H1 (cell line): ENCODE measurements at regions of chr12 and their contacts with region 1.

Region 1: DNA sequence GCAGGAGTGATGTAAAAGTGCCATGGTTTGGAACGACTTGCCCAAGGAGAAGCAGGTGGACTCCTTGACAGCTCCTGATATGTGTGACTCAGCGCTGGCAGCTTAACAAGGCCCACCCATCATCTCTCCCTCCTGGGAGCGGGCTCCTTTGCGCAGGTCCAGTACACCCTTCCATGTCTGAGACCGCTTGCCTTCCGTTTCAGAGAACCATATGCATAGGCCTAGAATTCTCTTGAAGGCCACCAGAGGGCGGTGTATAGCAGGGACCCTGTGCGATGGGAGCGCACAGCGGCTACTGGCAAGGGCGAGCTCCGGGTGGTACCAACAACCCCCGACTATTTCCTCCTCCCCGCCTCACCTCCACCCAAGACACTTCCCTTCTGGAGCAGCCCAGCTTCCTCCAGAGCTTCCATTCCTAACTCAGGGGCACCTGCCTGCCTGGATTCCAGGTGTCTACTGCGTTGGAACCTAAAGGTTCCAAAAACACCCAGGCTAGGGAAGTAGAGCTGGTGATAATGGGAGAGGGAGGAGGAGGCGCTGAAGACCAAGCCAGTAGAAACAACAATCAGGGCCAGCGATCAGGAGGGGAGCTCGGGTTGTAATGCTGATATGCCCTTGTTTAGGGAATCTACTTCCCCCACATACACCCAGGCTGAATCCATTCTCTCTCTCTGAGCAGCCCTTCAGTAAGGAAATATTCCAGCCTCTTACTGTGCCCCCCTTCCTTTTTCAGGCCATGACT is 6.2 kb downstream of the DHH start:
- DNase-seq: peak in 1 of 2 experiments; percentile 81
- H3K4me3 ChIP-seq: peak overlapping the region in 1 of 4 experiments; percentile 45; a peak in 3 of 8 replicates
- H3K27ac ChIP-seq: no peak overlapping the region
- H3K4me1 ChIP-seq: peaks cover 0 to 36% (median 12%) of the 10 kb centered on the region in 4 experiments; a peak in 6 of 7 replicates
- H3K27me3 ChIP-seq: peaks cover 46 to 69% (median 61%) of the 10 kb centered on the region in 4 experiments
- CTCF ChIP-seq: peak; percentile 84 to 93 (median 89)
- EP300 ChIP-seq: no peak
- POLR2A ChIP-seq: no peak
- RAD21 ChIP-seq: peak; percentile 67 to 74

Region 2: GRCh38 chr12:49049566-49050413 is 38.6 kb before region 1 on chr12:
- CTCF ChIA-PET with region 1: interaction called, 13 read pairs
- POLR2A ChIA-PET with region 1: no interaction called
- DNase-seq: no peak
- H3K4me3 ChIP-seq: no peak overlapping the region
- H3K27ac ChIP-seq: no peak overlapping the region
- H3K4me1 ChIP-seq: no peaks in the 10 kb centered on the region
- H3K27me3 ChIP-seq: no peaks in the 10 kb centered on the region
- CTCF ChIP-seq: no peak
- EP300 ChIP-seq: no peak
- POLR2A ChIP-seq: no peak
- RAD21 ChIP-seq: no peak

Region 3: DNA sequence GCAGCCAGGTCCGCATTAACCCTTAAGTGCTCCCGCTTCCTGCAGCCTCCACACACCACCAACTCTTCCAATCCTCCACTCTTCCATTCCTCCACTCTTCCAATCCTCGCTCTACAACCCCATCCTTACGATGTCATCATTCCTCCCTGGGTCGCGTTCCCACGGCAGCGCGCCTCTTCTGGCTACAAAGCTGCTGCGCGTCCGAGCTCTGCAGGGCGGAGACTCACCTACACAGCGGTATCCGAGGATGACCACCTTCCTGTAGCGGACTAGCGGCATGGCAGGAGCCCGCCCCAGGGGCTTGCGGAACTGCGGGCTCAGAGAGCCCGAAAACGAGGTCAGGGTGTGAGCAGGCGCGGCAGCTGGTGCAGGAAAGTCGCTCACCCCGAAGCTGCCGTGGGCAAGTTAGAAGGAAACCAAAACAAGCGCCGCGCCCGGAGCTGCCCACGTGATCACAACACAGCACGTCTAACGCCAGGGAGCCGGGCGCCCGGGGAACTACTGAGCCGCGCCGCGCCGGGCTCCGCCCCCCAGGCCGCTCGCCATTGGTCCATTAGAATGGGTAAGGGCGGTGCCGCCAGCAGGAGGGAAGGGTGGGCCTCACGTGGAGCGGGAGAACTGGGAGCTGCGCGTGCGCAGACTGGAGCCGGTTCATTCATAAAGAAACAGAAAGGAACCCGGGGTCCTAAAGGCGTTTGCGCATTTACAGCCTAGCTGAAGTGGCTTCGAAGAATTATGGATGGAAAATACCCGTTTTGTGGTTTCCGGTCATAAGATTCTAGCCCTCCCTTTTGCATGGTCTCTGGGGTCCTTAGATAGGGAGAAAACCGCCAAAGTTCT is 18.6 kb before region 1 on chr12 and contains the start of gene RHEBL1:
- CTCF ChIA-PET with region 1: interaction called, 129 read pairs
- POLR2A ChIA-PET with region 1: interaction called, 6 read pairs
- DNase-seq: peak; percentile 86 to 98
- H3K4me3 ChIP-seq: peak within 1 kb of the TSS; percentile 70 to 93 (median 80)
- H3K27ac ChIP-seq: no peak within 1 kb of the TSS
- H3K4me1 ChIP-seq: peaks cover 2 to 6% (median 4%) of the 10 kb centered on the region in 4 experiments; a peak in 5 of 7 replicates
- H3K27me3 ChIP-seq: peaks cover 0 to 8% (median 3%) of the 10 kb centered on the region in 4 experiments; a peak in 5 of 7 replicates
- CTCF ChIP-seq: no peak
- EP300 ChIP-seq: no peak
- POLR2A ChIP-seq: no peak
- RAD21 ChIP-seq: no peak
- total RNA-seq, gene RHEBL1: 7.0 and 7.5 TPM in 2 replicates

Region 4: DNA sequence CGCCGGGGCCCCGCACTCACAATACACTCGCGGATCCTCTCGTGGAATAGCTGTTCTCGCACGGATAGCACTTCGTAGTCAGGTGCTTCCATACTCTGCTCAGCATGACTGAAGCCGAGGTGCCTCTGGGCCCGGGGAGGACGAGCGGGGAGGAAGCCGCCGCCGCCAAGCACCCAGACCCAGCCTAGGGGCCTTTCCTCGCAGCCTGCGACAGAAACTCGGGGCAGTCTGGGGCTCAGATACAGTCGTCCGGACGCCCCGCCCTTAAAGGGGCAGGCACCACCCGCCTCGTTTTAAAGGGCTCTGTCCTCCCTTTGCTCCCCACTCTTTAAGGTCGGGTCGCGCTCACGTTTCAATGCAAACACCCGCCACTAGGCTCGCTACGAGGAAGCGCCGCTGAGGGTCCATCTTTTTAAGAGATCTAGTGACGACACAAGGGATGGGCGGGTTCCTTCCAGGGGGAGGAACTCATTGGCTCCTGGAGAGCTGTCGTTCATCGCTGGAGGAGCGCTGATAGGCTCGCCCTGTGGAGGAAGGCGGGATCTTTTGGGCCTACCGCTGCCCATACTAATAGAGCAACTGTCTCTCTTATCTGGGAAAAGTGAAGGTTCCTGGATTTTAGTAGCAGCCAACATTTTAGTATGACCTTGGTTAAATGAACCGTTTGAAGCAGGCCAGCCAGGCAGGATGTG is 22.2 kb after region 1 on chr12 and contains the start of gene LMBR1L:
- CTCF ChIA-PET with region 1: interaction called, 235 read pairs
- POLR2A ChIA-PET with region 1: interaction called, 16 read pairs
- DNase-seq: peak; percentile 90 to 93
- H3K4me3 ChIP-seq: peak within 1 kb of the TSS; percentile 74 to 99 (median 92)
- H3K27ac ChIP-seq: peak within 1 kb of the TSS; percentile 55; the same call in 1 of the 2 replicates
- H3K4me1 ChIP-seq: peaks cover 0 to 10% (median 2%) of the 10 kb centered on the region in 4 experiments; a peak in 3 of 7 replicates
- H3K27me3 ChIP-seq: no peaks in the 10 kb centered on the region
- CTCF ChIP-seq: peak; percentile 9 to 43 (median 40); a peak in 2 of 4 replicates
- EP300 ChIP-seq: no peak
- POLR2A ChIP-seq: peak in 1 of 2 experiments; percentile 60; a peak in 1 of 3 replicates
- RAD21 ChIP-seq: peak in 1 of 2 experiments; percentile 5; a peak in 1 of 4 replicates
- total RNA-seq, gene LMBR1L: 47.7 and 49.6 TPM in 2 replicates

Region 5: DNA sequence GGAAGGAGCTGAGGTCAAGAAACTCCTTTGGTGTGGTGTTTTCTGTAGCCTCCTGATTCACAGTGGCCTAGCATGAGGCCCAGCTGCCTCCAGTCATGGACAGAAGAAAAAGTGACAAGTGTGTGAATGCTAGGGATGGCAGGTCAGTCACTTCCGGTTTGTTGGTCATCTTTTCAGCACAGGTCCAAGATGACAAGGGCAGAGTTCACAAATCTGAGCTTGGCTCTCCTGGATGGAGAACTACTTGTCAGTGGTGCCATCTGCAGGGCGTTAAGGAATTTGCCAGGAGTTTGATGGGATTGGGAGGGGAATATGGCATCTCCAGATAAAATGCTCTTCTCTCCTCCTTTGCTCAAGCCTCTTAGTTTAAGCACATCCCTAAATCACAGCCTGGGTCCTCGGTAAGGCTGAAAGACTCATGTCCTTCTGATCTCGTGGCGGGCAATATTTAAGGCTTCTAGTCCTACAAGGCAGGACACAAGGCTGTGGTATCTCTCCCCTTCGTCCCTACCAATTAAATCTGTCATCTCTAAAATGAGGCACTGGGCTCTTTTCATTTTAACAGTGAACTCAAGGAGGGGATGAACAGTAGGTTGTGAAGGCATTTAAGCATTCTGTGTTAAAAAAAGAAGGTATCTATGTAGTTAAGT is 32.8 kb after region 1 on chr12:
- CTCF ChIA-PET with region 1: interaction called, 84 read pairs
- POLR2A ChIA-PET with region 1: interaction called, 6 read pairs
- DNase-seq: peak; percentile 13 to 56
- H3K4me3 ChIP-seq: no peak overlapping the region
- H3K27ac ChIP-seq: no peak overlapping the region
- H3K4me1 ChIP-seq: no peaks in the 10 kb centered on the region
- H3K27me3 ChIP-seq: no peaks in the 10 kb centered on the region
- CTCF ChIP-seq: peak; percentile 48 to 82 (median 80)
- EP300 ChIP-seq: no peak
- POLR2A ChIP-seq: no peak
- RAD21 ChIP-seq: peak; percentile 75 to 80